T-cell (primary cell): ENCODE measurements at regions of chr12 and their contacts with region 1.

Region 1: GRCh38 chr12:68223083-68223747 is 2.4 kb downstream of the IL26 start:
- DNase-seq: peak; percentile 19 to 90 (median 60)
- ATAC-seq: peak; percentile 95 to 99 (median 95)
- H3K4me3 ChIP-seq: no peak overlapping the region
- H3K4me3 Mint-ChIP-seq: peak overlapping the region; percentile 32 to 60 (median 50)
- H3K27ac ChIP-seq: no peak overlapping the region
- H3K27ac Mint-ChIP-seq: peak overlapping the region in 1 of 2 donors; percentile 77
- H3K4me1 ChIP-seq: peaks cover 0 to 4% of the 10 kb centered on the region in 2 experiments
- H3K4me1 Mint-ChIP-seq: peaks cover 7 to 17% (median 8%) of the 10 kb centered on the region in 3 donors
- H3K27me3 ChIP-seq: no peaks in the 10 kb centered on the region
- H3K27me3 Mint-ChIP-seq: peaks cover 0 to 5% of the 10 kb centered on the region in 2 donors

Region 2: GRCh38 chr12:68106160-68106559 is 117.1 kb before region 1 on chr12:
- CTCF ChIA-PET with region 1: no interaction called
- POLR2A ChIA-PET with region 1: no interaction called
- DNase-seq: no peak
- ATAC-seq: no peak
- H3K4me3 ChIP-seq: no peak overlapping the region
- H3K4me3 Mint-ChIP-seq: no peak overlapping the region
- H3K27ac ChIP-seq: no peak overlapping the region
- H3K27ac Mint-ChIP-seq: no peak overlapping the region
- H3K4me1 ChIP-seq: no peaks in the 10 kb centered on the region
- H3K4me1 Mint-ChIP-seq: no peaks in the 10 kb centered on the region
- H3K27me3 ChIP-seq: no peaks in the 10 kb centered on the region
- H3K27me3 Mint-ChIP-seq: no peaks in the 10 kb centered on the region

Region 3: GRCh38 chr12:68180792-68181744 is 42.1 kb before region 1 on chr12:
- CTCF ChIA-PET with region 1: interaction called, 3 to 12 read pairs
- POLR2A ChIA-PET with region 1: no interaction called
- DNase-seq: peak in 30 of 35 experiments; percentile 5 to 73 (median 26)
- ATAC-seq: peak; percentile 83 to 91 (median 90)
- H3K4me3 ChIP-seq: no peak overlapping the region
- H3K4me3 Mint-ChIP-seq: peak overlapping the region; percentile 0 to 45 (median 31)
- H3K27ac ChIP-seq: peak overlapping the region; percentile 64
- H3K27ac Mint-ChIP-seq: peak overlapping the region; percentile 75 to 90
- H3K4me1 ChIP-seq: peaks cover 38 to 44% of the 10 kb centered on the region in 2 experiments
- H3K4me1 Mint-ChIP-seq: peaks cover 53 to 60% (median 57%) of the 10 kb centered on the region in 3 donors
- H3K27me3 ChIP-seq: no peaks in the 10 kb centered on the region
- H3K27me3 Mint-ChIP-seq: peaks cover 0 to 2% of the 10 kb centered on the region in 2 donors

Region 4: GRCh38 chr12:68236421-68237059 is 13.3 kb after region 1 on chr12:
- CTCF ChIA-PET with region 1: interaction called, 13 to 15 read pairs
- POLR2A ChIA-PET with region 1: no interaction called
- DNase-seq: peak in 32 of 35 experiments; percentile 6 to 80 (median 18)
- ATAC-seq: peak; percentile 73 to 78 (median 75)
- H3K4me3 ChIP-seq: peak overlapping the region; percentile 42 to 49
- H3K4me3 Mint-ChIP-seq: peak overlapping the region; percentile 84 to 86 (median 85)
- H3K27ac ChIP-seq: peak overlapping the region; percentile 52
- H3K27ac Mint-ChIP-seq: peak overlapping the region; percentile 91 to 97
- H3K4me1 ChIP-seq: peaks cover 18 to 26% of the 10 kb centered on the region in 2 experiments
- H3K4me1 Mint-ChIP-seq: peaks cover 48 to 56% (median 50%) of the 10 kb centered on the region in 3 donors
- H3K27me3 ChIP-seq: no peaks in the 10 kb centered on the region
- H3K27me3 Mint-ChIP-seq: no peaks in the 10 kb centered on the region

Region 5: GRCh38 chr12:68349921-68350606 is 126.8 kb after region 1 on chr12:
- CTCF ChIA-PET with region 1: no interaction called
- POLR2A ChIA-PET with region 1: no interaction called
- DNase-seq: no peak
- ATAC-seq: no peak
- H3K4me3 ChIP-seq: no peak overlapping the region
- H3K4me3 Mint-ChIP-seq: no peak overlapping the region
- H3K27ac ChIP-seq: no peak overlapping the region
- H3K27ac Mint-ChIP-seq: no peak overlapping the region
- H3K4me1 ChIP-seq: peaks cover 0 to 4% of the 10 kb centered on the region in 2 experiments
- H3K4me1 Mint-ChIP-seq: peaks cover 5 to 12% (median 11%) of the 10 kb centered on the region in 3 donors
- H3K27me3 ChIP-seq: peaks cover 0 to 2% of the 10 kb centered on the region in 2 experiments
- H3K27me3 Mint-ChIP-seq: no peaks in the 10 kb centered on the region